IMR-90 (cell line): ENCODE measurements at regions of chr9 and their contacts with region 1.

Region 1: DNA sequence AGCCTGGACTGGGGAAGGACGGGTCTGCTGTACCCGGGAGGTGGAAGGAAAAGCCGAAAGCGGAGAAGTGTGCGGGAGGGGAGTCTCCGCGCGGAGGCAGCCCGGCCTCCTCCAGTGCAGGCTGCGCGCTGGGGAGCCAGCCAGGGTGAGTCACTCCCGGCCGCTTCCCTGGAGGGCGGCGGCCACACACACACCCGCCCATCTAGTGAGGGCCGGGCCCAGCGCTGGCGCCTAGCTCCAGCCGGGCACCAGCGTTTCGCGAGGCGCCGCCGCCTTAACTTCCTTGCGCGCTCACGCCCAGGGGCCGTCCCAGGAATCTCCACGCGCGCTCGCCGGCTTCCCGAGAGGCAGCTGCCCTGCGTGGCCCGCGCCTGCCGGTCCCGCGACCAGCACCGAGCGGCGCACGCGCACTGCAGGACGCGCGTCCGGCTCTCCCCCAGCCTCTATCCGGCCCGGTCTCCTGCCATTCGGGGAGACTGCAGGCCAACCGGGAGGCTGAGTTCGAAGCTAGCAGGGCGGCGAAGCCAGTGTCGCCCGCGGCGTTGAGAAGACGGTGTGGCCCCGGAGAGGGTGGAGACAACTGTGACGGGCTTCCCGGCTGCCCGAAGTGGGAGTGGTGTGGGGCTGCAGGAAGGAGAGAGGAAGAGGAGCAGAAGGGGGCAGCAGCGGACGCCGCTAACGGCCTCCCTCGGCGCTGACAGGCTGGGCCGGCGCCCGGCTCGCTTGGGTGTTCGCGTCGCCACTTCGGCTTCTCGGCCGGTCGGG is at the start of gene JAK2:
- DNase-seq: peak; percentile 93
- ATAC-seq: peak; percentile 89
- H3K4me3 ChIP-seq: peak within 1 kb of the TSS; percentile 64
- H3K27ac ChIP-seq: peak within 1 kb of the TSS; percentile 95
- H3K4me1 ChIP-seq: 0 out of 2 replicates have a peak, but pooled peaks cover 4% of the 10 kb centered on the region
- H3K27me3 ChIP-seq: no peaks in the 10 kb centered on the region
- CTCF ChIP-seq: peak; percentile 57
- POLR2A ChIP-seq: peak; percentile 55
- RAD21 ChIP-seq: peak; percentile 37
- total RNA-seq, gene JAK2: 6.1 and 7.2 TPM in 2 replicates

Region 2: DNA sequence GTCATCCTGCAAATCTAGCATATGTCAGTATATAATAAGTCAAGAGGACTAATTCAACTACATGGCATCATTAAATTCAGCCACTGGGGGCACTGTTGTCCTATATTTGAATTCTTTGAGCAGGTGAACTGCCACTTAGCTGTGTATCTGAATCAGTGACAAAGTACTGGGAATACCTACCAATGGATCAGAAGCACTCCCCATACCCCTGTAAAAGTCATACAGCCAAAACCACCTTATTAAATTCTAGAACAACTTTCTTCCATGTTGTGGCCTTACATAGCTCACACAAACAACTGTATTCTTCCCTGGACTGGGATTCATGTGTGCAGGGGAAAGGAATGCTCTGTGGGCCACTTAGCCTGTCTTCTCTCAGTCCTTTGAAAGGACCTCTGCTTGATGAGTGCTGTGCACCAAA is 380.1 kb before region 1 on chr9:
- CTCF ChIA-PET with region 1: no interaction called
- POLR2A ChIA-PET with region 1: no interaction called
- dilution Hi-C with region 1: no loop called
- in situ Hi-C with region 1: no loop called
- intact Hi-C with region 1: loop called (anchors 5 kb)
- DNase-seq: peak; percentile 59
- ATAC-seq: peak; percentile 82
- H3K4me3 ChIP-seq: no peak overlapping the region
- H3K27ac ChIP-seq: no peak overlapping the region
- H3K4me1 ChIP-seq: no peaks in the 10 kb centered on the region
- H3K27me3 ChIP-seq: no peaks in the 10 kb centered on the region; the same call in 1 of the 2 replicates
- CTCF ChIP-seq: peak; percentile 71
- POLR2A ChIP-seq: no peak
- RAD21 ChIP-seq: peak; percentile 69

Region 3: GRCh38 chr9:4762108-4762885 is 222.5 kb before region 1 on chr9:
- CTCF ChIA-PET with region 1: interaction called, 10 read pairs
- POLR2A ChIA-PET with region 1: no interaction called
- dilution Hi-C with region 1: no loop called
- in situ Hi-C with region 1: loop called (anchors 5 kb)
- intact Hi-C with region 1: loop called (anchors 1 kb)
- DNase-seq: peak; percentile 73
- ATAC-seq: peak; percentile 57
- H3K4me3 ChIP-seq: no peak overlapping the region
- H3K27ac ChIP-seq: no peak overlapping the region
- H3K4me1 ChIP-seq: no peaks in the 10 kb centered on the region
- H3K27me3 ChIP-seq: peaks cover 5% of the 10 kb centered on the region
- CTCF ChIP-seq: peak; percentile 86
- POLR2A ChIP-seq: 0 out of 2 replicates have a peak, but pooled peaks have one; percentile 31
- RAD21 ChIP-seq: peak; percentile 91

Region 4: GRCh38 chr9:4832786-4833579 is 151.8 kb before region 1 on chr9:
- CTCF ChIA-PET with region 1: no interaction called
- POLR2A ChIA-PET with region 1: no interaction called
- dilution Hi-C with region 1: no loop called
- in situ Hi-C with region 1: no loop called
- intact Hi-C with region 1: loop called (anchors 10 kb)
- DNase-seq: peak; percentile 100
- ATAC-seq: peak; percentile 65
- H3K4me3 ChIP-seq: no peak overlapping the region
- H3K27ac ChIP-seq: peak overlapping the region; percentile 85
- H3K4me1 ChIP-seq: peaks cover 36% of the 10 kb centered on the region
- H3K27me3 ChIP-seq: no peaks in the 10 kb centered on the region
- CTCF ChIP-seq: no peak
- POLR2A ChIP-seq: peak; percentile 20; the same call in 1 of the 2 replicates
- RAD21 ChIP-seq: no peak

Region 5: DNA sequence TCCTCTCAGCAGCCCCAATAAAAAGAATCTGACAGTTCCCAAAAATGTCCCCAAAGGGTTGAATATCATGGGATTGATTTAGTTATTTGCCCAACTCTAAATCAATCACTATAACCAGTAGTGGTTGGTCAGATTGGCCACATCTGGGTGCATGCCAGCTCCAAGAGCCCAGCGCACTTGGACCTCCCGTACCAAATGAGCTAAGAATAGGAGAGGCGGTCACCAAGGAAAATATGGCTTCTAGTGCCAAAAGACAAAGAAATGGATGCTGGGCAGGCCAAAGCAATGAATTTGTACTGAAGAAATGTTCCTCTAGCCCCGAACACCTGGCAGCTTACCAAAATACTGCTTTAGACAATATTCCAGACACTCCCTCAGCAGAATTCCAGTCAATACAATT is 111.7 kb before region 1 on chr9:
- CTCF ChIA-PET with region 1: no interaction called
- POLR2A ChIA-PET with region 1: no interaction called
- dilution Hi-C with region 1: no loop called
- in situ Hi-C with region 1: no loop called
- intact Hi-C with region 1: no loop called
- DNase-seq: no peak
- ATAC-seq: no peak
- H3K4me3 ChIP-seq: no peak overlapping the region
- H3K27ac ChIP-seq: no peak overlapping the region
- H3K4me1 ChIP-seq: no peaks in the 10 kb centered on the region
- H3K27me3 ChIP-seq: no peaks in the 10 kb centered on the region
- CTCF ChIP-seq: no peak
- POLR2A ChIP-seq: no peak
- RAD21 ChIP-seq: no peak

Region 6: GRCh38 chr9:4904322-4905134 is 80.3 kb before region 1 on chr9:
- CTCF ChIA-PET with region 1: no interaction called
- POLR2A ChIA-PET with region 1: interaction called, 5 read pairs
- dilution Hi-C with region 1: no loop called
- in situ Hi-C with region 1: no loop called
- intact Hi-C with region 1: loop called (anchors 5 kb)
- DNase-seq: peak; percentile 74
- ATAC-seq: peak; percentile 74
- H3K4me3 ChIP-seq: no peak overlapping the region
- H3K27ac ChIP-seq: peak overlapping the region; percentile 14; the same call in 1 of the 2 replicates
- H3K4me1 ChIP-seq: peaks cover 6% of the 10 kb centered on the region; the same call in 1 of the 2 replicates
- H3K27me3 ChIP-seq: no peaks in the 10 kb centered on the region
- CTCF ChIP-seq: no peak
- POLR2A ChIP-seq: no peak
- RAD21 ChIP-seq: no peak

Region 7: GRCh38 chr9:5437254-5438216 is 452.7 kb after region 1 on chr9 and contains the start of gene PLGRKT:
- CTCF ChIA-PET with region 1: no interaction called
- POLR2A ChIA-PET with region 1: no interaction called
- dilution Hi-C with region 1: no loop called
- in situ Hi-C with region 1: no loop called
- intact Hi-C with region 1: loop called (anchors 5 kb)
- DNase-seq: peak; percentile 87
- ATAC-seq: peak; percentile 98
- H3K4me3 ChIP-seq: peak within 1 kb of the TSS; percentile 75
- H3K27ac ChIP-seq: peak within 1 kb of the TSS; percentile 70
- H3K4me1 ChIP-seq: peaks cover 5% of the 10 kb centered on the region
- H3K27me3 ChIP-seq: no peaks in the 10 kb centered on the region
- CTCF ChIP-seq: peak; percentile 29; the same call in 1 of the 2 replicates
- POLR2A ChIP-seq: peak; percentile 81
- RAD21 ChIP-seq: peak; percentile 27
- total RNA-seq, gene PLGRKT: 12.7 and 13.6 TPM in 2 replicates